ENCODE measurements at regions of chr2 and their contacts with region 1.

Region 1: GRCh38 chr2:219119422-219120043 is 41.1 kb downstream of the NHEJ1 start:
- DNase-seq: peak; percentile 45
- H3K4me3 ChIP-seq: no peak overlapping the region
- H3K27ac ChIP-seq: no peak overlapping the region
- H3K4me1 ChIP-seq: no peaks in the 10 kb centered on the region
- H3K27me3 ChIP-seq: no peaks in the 10 kb centered on the region
- CTCF ChIP-seq: peak; percentile 57 to 64
- POLR2A ChIP-seq: no peak

Region 2: DNA sequence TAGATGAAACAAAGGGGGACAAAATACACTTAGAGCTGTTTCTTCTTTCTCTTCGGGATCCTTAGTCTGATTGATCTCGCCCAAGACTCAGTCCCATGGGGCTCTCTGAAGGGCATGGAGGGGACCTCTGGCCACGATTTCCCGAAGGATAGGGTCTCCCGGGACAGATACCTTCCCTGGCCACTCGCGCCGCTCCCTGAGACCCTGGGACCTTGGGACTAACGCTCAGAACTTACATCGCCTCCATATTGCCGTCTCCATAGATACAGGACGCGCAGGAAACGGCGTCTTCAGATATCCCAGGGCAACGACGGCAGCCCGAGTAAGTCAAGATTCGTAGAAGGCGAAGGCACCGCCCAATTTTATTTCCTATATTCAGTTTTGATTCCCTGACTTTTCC is 78.3 kb before region 1 on chr2 and contains the start of gene CFAP65:
- CTCF ChIA-PET with region 1: interaction called, 10 read pairs
- POLR2A ChIA-PET with region 1: no interaction called
- dilution Hi-C with region 1: no loop called
- intact Hi-C with region 1: no loop called
- DNase-seq: peak; percentile 40
- H3K4me3 ChIP-seq: peak within 1 kb of the TSS in 1 of 3 experiments; percentile 21
- H3K27ac ChIP-seq: no peak within 1 kb of the TSS
- H3K4me1 ChIP-seq: no peaks in the 10 kb centered on the region
- H3K27me3 ChIP-seq: peaks cover 18 to 22% of the 10 kb centered on the region in 2 experiments
- CTCF ChIP-seq: no peak
- POLR2A ChIP-seq: no peak
- total RNA-seq, gene CFAP65: not detected in 2 replicates

Region 3: GRCh38 chr2:219073413-219074129 is 46.0 kb before region 1 on chr2:
- CTCF ChIA-PET with region 1: interaction called, 135 read pairs
- POLR2A ChIA-PET with region 1: no interaction called
- dilution Hi-C with region 1: no loop called
- intact Hi-C with region 1: loop called (anchors 1 kb)
- DNase-seq: peak; percentile 23
- H3K4me3 ChIP-seq: no peak overlapping the region
- H3K27ac ChIP-seq: no peak overlapping the region
- H3K4me1 ChIP-seq: no peaks in the 10 kb centered on the region
- H3K27me3 ChIP-seq: no peaks in the 10 kb centered on the region
- CTCF ChIP-seq: peak; percentile 60 to 65
- POLR2A ChIP-seq: no peak

Region 4: GRCh38 chr2:219087361-219087760 is 32.2 kb before region 1 on chr2:
- CTCF ChIA-PET with region 1: interaction called, 13 read pairs
- POLR2A ChIA-PET with region 1: interaction called, 3 read pairs
- dilution Hi-C with region 1: no loop called
- intact Hi-C with region 1: no loop called
- DNase-seq: no peak
- H3K4me3 ChIP-seq: no peak overlapping the region
- H3K27ac ChIP-seq: no peak overlapping the region
- H3K4me1 ChIP-seq: no peaks in the 10 kb centered on the region
- H3K27me3 ChIP-seq: no peaks in the 10 kb centered on the region
- CTCF ChIP-seq: no peak
- POLR2A ChIP-seq: no peak

Region 5: DNA sequence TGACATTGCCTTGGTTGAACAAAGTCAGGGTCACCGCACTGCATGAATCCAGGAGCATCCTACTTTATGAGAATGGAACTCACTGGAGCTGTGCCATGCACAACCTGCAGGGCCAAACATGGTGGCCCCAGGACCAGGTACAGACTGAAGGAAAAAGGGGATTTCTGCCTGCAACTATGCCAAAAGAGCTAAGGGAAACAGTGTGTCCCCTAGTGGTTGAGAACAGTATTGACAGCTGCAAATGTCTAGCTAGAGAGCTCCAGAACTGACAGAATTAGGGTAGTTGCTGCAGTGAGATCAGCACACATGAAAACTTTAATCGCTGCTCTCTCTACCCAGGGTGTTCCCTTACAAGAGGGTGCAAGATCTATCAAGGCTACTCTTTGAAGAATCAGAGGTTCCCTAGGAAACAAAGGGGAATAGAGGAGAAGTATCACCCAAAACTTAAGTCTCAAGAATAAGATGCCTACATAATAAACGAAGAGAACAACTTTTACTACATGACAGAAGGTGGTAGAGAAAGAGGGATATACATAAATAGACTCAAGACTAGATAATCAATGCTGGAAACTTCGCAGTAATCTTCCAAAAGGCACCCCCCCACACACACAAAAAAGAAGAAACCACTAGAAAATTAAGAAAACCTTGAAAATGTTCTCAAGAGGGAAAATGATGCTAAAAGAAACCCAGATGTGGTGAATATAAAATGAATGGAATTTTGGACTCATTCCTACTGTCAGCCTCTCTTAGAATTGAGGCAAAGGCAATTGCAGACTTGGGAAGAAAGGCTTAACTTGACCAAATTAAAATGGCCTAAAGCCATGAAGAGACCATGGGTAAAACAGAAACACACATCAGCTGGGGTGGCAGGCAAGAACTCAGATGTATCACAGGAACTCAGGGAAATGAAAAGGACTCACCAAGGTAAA is 15.2 kb before region 1 on chr2:
- CTCF ChIA-PET with region 1: interaction called, 51 read pairs
- POLR2A ChIA-PET with region 1: no interaction called
- dilution Hi-C with region 1: no loop called
- intact Hi-C with region 1: no loop called
- DNase-seq: peak; percentile 35
- H3K4me3 ChIP-seq: no peak overlapping the region
- H3K27ac ChIP-seq: no peak overlapping the region
- H3K4me1 ChIP-seq: no peaks in the 10 kb centered on the region
- H3K27me3 ChIP-seq: no peaks in the 10 kb centered on the region
- CTCF ChIP-seq: peak; percentile 84 to 86
- POLR2A ChIP-seq: no peak

Region 6: DNA sequence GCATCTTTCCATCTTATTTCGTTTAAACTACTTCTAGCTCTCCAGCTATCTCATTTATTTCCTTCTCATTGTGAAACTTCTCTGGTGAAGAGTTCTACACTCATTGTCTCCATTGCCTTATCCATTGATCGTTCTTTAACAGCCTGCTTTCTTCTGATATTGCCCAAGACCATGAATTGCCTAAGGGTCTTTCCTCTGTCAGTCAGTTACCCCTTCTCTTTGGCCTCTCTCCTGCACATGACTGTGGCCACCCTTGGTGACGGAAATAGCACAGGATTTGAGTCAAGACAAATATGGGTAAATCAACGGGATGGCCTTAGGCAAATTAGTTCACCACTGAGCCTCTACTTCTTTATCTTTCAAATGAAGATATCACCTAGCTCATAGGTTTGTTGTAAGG is 14.4 kb after region 1 on chr2:
- CTCF ChIA-PET with region 1: interaction called, 22 read pairs
- POLR2A ChIA-PET with region 1: no interaction called
- dilution Hi-C with region 1: no loop called
- intact Hi-C with region 1: no loop called
- DNase-seq: no peak
- H3K4me3 ChIP-seq: no peak overlapping the region
- H3K27ac ChIP-seq: no peak overlapping the region
- H3K4me1 ChIP-seq: no peaks in the 10 kb centered on the region
- H3K27me3 ChIP-seq: no peaks in the 10 kb centered on the region
- CTCF ChIP-seq: no peak
- POLR2A ChIP-seq: no peak

Region 7: DNA sequence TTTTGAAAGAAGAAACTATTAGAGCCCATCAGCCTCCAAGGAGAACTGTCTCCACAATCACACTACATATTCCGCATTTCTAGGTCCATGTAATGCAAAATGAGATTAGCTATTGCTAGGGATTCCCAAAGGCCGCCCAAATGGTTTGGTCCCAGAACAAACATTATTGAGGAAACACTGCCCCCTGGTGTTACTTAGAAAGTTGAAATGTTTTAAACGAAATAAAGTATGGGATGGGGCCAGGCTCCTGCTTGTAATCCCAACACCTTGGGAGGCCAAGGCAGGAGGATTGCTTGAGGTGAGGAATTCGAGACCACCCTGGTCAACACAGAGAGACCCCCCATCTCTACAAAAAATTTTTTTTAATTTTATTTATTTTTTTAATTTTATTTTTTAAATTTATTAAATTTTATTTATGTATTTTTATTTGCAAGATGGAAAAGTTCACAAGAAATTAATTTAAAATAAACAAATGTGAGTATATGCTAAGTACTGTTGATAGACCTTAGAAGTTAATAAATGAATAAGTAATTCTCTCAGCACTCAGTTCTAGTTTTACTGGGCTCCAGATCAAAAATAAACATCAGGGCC is 35.6 kb after region 1 on chr2:
- CTCF ChIA-PET with region 1: interaction called, 42 read pairs
- POLR2A ChIA-PET with region 1: no interaction called
- dilution Hi-C with region 1: no loop called
- intact Hi-C with region 1: no loop called
- DNase-seq: peak; percentile 61
- H3K4me3 ChIP-seq: no peak overlapping the region
- H3K27ac ChIP-seq: no peak overlapping the region
- H3K4me1 ChIP-seq: peaks cover 6% of the 10 kb centered on the region
- H3K27me3 ChIP-seq: no peaks in the 10 kb centered on the region
- CTCF ChIP-seq: peak; percentile 28 to 36
- POLR2A ChIP-seq: no peak

Region 8: GRCh38 chr2:219165053-219165911 is 45.7 kb after region 1 on chr2:
- CTCF ChIA-PET with region 1: no interaction called
- POLR2A ChIA-PET with region 1: no interaction called
- dilution Hi-C with region 1: no loop called
- intact Hi-C with region 1: no loop called
- DNase-seq: no peak
- H3K4me3 ChIP-seq: no peak overlapping the region
- H3K27ac ChIP-seq: no peak overlapping the region
- H3K4me1 ChIP-seq: peaks cover 4% of the 10 kb centered on the region
- H3K27me3 ChIP-seq: no peaks in the 10 kb centered on the region
- CTCF ChIP-seq: no peak
- POLR2A ChIP-seq: no peak

Measured in endothelial cell of umbilical vein (primary cell).